Common myeloid progenitor, CD34-positive (primary cell): ENCODE measurements at regions of chr11 and their contacts with region 1.

Region 1: GRCh38 chr11:36738292-36738861 is 140.3 kb upstream of the RAG2 start:
- DNase-seq: peak in 2 of 3 donors; percentile 14 to 53
- H3K4me3 ChIP-seq: no peak overlapping the region
- H3K27ac ChIP-seq: no peak overlapping the region
- H3K4me1 ChIP-seq: peaks cover 0 to 16% (median 9%) of the 10 kb centered on the region in 4 experiments
- H3K27me3 ChIP-seq: peaks cover 0 to 2% (median 0%) of the 10 kb centered on the region in 5 experiments

Region 2: DNA sequence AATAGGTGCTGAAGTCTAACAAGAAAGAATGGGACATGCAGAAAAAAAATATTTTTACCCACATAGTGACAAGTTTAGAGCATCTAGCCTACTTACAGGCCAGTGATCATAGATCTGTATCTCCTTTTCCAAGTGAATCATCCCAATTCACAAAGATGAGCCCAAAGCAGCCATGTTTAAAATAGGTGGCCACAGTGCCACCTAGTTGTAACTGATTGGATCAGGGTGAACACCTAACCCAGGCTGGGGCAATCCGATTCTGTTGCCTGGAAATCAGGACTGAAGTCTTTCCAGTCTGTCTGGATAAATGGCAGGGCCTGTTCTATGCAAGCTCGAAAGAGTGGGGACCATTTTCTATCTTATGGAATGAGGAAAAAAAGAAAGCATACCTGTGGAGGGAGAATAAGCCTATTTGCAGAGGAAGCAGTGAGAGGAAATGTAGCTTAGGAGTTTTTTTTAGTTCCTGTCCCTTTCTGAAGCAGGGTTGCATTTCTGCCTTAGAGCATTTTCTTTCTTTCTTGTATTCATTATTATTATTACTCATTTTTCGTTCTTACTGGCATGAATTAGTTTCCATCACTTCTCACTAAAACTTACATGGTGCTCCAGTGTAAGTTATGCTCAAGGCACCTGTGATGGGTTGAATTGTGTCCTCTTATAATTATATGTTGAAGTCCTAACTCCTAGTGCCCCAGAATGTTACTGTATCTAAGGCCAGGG is 27.1 kb before region 1 on chr11:
- CTCF ChIA-PET with region 1: interaction called, 10 read pairs
- POLR2A ChIA-PET with region 1: no interaction called
- DNase-seq: no peak
- H3K4me3 ChIP-seq: no peak overlapping the region
- H3K27ac ChIP-seq: no peak overlapping the region
- H3K4me1 ChIP-seq: peaks cover 1 to 25% (median 4%) of the 10 kb centered on the region in 4 experiments
- H3K27me3 ChIP-seq: no peaks in the 10 kb centered on the region

Region 3: DNA sequence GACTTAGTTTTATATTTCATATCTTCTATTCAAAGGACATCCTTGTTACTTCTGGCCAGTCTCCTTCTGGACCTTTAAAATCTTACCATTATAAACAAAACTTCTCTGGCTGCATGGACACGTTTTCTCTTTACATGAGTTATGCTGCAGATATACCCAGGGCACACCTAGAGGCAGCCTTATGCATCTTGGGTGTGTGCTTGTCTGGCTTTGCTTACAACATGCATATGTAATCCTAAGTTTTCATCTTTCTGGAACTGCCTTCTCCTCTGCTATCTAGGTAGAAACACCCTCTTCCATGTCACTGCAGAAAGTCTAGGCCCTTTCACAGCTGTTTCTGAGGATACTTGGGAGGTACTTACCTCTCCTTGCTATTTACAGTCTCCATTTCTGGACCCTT is 45.4 kb after region 1 on chr11:
- CTCF ChIA-PET with region 1: no interaction called
- POLR2A ChIA-PET with region 1: no interaction called
- DNase-seq: no peak
- H3K4me3 ChIP-seq: no peak overlapping the region
- H3K27ac ChIP-seq: no peak overlapping the region
- H3K4me1 ChIP-seq: no peaks in the 10 kb centered on the region
- H3K27me3 ChIP-seq: peaks cover 2 to 13% (median 7%) of the 10 kb centered on the region in 5 experiments